Natural killer cell (primary cell): ENCODE measurements at regions of chr12 and their contacts with region 1.

Region 1: DNA sequence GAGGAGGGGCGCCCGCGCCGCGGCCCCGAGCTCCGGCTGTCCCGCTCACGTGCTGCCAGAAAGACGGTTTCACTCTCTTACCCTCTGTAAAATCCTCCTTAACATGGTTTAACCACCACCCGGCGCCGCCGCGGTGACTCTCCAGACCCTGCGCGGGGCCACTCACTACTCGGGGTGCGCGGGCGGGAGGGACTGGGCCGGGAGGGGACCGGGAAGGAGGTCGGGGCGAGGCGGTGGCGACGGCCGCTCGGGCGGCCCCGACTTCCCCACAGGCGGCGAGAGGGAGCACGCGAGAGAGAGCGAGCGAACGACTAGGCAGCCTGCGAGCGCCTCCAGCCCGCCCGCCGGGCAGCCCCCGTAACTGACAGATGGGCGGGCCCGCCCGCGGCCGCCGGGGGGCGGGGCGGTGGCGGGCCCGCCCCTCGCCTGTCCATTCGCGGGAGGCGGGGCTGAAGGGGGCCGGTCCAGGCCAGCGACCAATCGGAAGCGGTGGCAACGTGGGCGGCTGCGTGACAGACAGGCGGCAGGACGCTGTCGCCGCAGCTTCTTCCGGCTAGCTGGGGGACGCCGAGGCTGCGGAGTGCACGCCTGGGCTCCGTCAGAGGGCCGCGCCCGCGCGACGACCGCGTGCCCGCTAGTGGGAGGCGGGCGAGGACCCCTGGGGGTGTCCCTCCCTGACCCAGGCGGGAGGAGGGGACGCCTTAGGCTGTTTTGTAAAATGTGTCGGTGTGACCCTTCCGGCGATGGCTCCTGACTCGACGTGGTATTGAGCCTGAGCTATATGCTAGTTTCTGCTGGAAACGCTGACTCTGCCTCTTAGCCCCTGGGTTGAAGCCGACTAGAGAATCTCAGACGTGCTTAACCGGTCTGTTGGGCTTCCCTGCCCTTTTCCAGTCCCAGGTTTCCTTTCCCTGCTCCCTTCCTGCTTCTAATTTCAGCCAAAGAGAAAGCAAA is at the start of gene EEA1:
- DNase-seq: peak; percentile 94 to 97
- ATAC-seq: peak; percentile 81 to 95 (median 85)
- H3K4me3 ChIP-seq: peak within 1 kb of the TSS; percentile 86
- H3K4me3 Mint-ChIP-seq: peak within 1 kb of the TSS; percentile 92
- H3K27ac ChIP-seq: peak within 1 kb of the TSS; percentile 98
- H3K27ac Mint-ChIP-seq: peak within 1 kb of the TSS; percentile 90
- H3K4me1 ChIP-seq: peaks cover 16% of the 10 kb centered on the region
- H3K4me1 Mint-ChIP-seq: peaks cover 31 to 33% of the 10 kb centered on the region in 2 donors
- H3K27me3 ChIP-seq: no peaks in the 10 kb centered on the region
- H3K27me3 Mint-ChIP-seq: no peaks in the 10 kb centered on the region
- CTCF ChIP-seq: no peak
- total RNA-seq, gene EEA1: 15.0 to 20.0 (median 15.0) TPM

Region 2: GRCh38 chr12:92593734-92594402 is 335.4 kb before region 1 on chr12:
- intact Hi-C with region 1: loop called (anchors 5 kb)
- DNase-seq: peak; percentile 70 to 96
- ATAC-seq: peak; percentile 86 to 97 (median 91)
- H3K4me3 ChIP-seq: no peak overlapping the region
- H3K4me3 Mint-ChIP-seq: peak overlapping the region; percentile 83
- H3K27ac ChIP-seq: peak overlapping the region; percentile 99
- H3K27ac Mint-ChIP-seq: peak overlapping the region; percentile 91 to 98
- H3K4me1 ChIP-seq: peaks cover 21% of the 10 kb centered on the region
- H3K4me1 Mint-ChIP-seq: peaks cover 33 to 49% of the 10 kb centered on the region in 2 donors
- H3K27me3 ChIP-seq: no peaks in the 10 kb centered on the region
- H3K27me3 Mint-ChIP-seq: no peaks in the 10 kb centered on the region
- CTCF ChIP-seq: no peak

Region 3: GRCh38 chr12:92639017-92639416 is 290.2 kb before region 1 on chr12:
- intact Hi-C with region 1: no loop called
- DNase-seq: no peak
- ATAC-seq: no peak
- H3K4me3 ChIP-seq: no peak overlapping the region
- H3K4me3 Mint-ChIP-seq: no peak overlapping the region
- H3K27ac ChIP-seq: no peak overlapping the region
- H3K27ac Mint-ChIP-seq: no peak overlapping the region
- H3K4me1 ChIP-seq: no peaks in the 10 kb centered on the region
- H3K4me1 Mint-ChIP-seq: no peaks in the 10 kb centered on the region
- H3K27me3 ChIP-seq: no peaks in the 10 kb centered on the region
- H3K27me3 Mint-ChIP-seq: peaks cover 0 to 7% of the 10 kb centered on the region in 2 donors
- CTCF ChIP-seq: no peak

Region 4: DNA sequence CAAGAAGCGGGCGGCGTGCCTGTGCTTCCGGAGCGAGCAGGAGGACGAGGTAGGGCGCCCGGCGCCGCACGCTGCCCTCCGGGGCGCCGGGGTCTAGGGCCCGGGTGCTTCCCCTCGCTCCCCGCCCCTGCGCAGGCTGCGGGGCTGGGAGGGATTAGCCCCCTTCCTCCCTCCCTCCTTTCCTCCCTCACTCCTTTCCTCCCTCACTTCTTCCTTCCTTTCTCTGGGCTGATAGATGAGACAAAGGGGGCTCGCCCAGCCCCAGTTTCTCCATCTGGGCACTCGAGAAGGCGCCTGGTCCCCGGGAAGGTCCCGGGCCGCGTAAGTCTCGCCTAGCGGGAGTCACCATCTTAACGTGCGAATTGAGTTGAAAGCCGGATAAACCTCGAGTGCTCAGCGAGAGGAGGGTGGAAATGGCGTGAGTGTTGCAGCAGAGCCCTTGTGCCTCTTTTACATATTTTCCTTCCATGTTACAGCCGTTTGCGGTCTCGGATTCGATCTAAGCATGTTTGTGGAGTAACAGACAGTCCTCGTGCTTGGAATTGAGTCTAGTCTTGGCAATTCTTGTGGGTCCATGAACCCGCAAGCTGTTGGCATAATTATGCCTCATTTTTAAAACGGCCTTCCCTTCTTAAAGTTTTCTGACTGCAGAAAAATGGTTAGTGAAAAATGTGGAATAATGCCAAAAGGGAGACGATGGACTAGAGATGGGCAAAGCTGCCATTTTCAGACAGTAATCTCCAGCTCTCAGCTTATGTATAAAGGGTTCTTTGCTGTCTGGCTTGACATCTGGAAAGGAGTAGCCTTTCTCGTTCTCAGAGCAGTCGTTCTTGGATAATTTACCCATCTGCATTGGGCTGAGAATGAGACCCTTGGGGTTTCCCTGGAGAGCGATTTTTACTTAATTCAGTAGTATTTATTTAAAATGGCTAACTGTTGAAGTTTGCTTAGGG is 449.4 kb after region 1 on chr12:
- intact Hi-C with region 1: loop called (anchors 5 kb)
- DNase-seq: peak; percentile 53 to 84
- ATAC-seq: peak; percentile 49 to 71 (median 54)
- H3K4me3 ChIP-seq: peak overlapping the region; percentile 67
- H3K4me3 Mint-ChIP-seq: peak overlapping the region; percentile 99
- H3K27ac ChIP-seq: peak overlapping the region; percentile 76
- H3K27ac Mint-ChIP-seq: peak overlapping the region; percentile 93 to 98
- H3K4me1 ChIP-seq: peaks cover 14% of the 10 kb centered on the region
- H3K4me1 Mint-ChIP-seq: peaks cover 33 to 46% of the 10 kb centered on the region in 2 donors
- H3K27me3 ChIP-seq: no peaks in the 10 kb centered on the region
- H3K27me3 Mint-ChIP-seq: peaks cover 0 to 5% of the 10 kb centered on the region in 2 donors
- CTCF ChIP-seq: no peak

Region 5: GRCh38 chr12:93441617-93442410 is 512.6 kb after region 1 on chr12 and contains the start of gene UBE2N:
- intact Hi-C with region 1: loop called (anchors 5 kb)
- DNase-seq: peak; percentile 95 to 96
- ATAC-seq: peak; percentile 86 to 96 (median 87)
- H3K4me3 ChIP-seq: peak within 1 kb of the TSS; percentile 70
- H3K4me3 Mint-ChIP-seq: peak within 1 kb of the TSS; percentile 98
- H3K27ac ChIP-seq: peak within 1 kb of the TSS; percentile 92
- H3K27ac Mint-ChIP-seq: peak within 1 kb of the TSS; percentile 96 to 98
- H3K4me1 ChIP-seq: peaks cover 23% of the 10 kb centered on the region
- H3K4me1 Mint-ChIP-seq: peaks cover 48% of the 10 kb centered on the region in 2 donors
- H3K27me3 ChIP-seq: no peaks in the 10 kb centered on the region
- H3K27me3 Mint-ChIP-seq: no peaks in the 10 kb centered on the region
- CTCF ChIP-seq: no peak
- total RNA-seq, gene UBE2N: 72.3 to 79.7 (median 72.9) TPM

Region 6: DNA sequence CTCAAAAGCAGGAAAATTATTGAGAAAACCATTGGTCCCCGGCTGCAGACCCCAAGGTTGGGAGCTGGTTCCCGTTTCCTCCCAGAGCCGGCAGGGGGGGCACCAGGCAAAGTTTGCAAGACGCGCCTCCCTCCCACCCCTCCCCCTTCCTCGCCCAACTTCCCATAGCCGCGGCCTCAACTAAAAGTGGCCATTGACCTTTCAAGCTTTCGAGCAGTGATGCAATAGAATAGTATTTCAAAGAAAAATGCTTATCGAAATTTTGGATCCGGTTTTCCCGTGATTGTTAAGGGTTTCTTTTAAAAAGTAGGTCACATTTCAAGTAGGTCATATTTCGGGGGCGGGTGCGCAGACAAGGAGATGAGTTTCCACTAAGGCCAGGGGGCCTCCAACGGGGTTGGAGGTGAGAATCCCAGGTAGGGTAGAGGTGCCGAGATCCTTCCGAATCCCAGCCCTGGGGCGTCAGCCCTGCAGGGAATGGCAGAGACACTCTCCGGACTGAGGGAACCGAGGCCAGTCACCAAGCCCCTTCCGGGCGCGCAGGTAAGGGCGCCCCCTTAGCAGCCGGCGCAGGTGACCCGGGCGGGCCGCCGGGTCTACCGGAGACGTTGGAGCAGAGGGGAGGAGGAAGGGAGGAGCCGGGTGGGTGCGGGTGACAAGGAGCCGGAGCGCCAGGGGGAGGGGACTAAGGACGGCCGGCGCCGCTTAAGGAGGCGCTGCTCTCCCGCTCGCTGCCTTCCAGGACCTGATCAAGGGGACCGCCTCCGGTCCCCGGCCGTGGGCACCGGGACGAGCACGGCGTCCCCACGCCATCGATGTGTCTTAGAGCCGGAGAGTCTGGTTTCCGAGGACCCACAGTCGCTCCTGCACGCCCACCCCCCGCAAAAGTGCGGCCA is 640.7 kb after region 1 on chr12:
- intact Hi-C with region 1: loop called (anchors 5 kb)
- DNase-seq: peak; percentile 66 to 85
- ATAC-seq: peak; percentile 40 to 63 (median 46)
- H3K4me3 ChIP-seq: peak overlapping the region; percentile 95
- H3K4me3 Mint-ChIP-seq: peak overlapping the region; percentile 95
- H3K27ac ChIP-seq: peak overlapping the region; percentile 80
- H3K27ac Mint-ChIP-seq: peak overlapping the region; percentile 86 to 89
- H3K4me1 ChIP-seq: peaks cover 26% of the 10 kb centered on the region
- H3K4me1 Mint-ChIP-seq: peaks cover 31 to 38% of the 10 kb centered on the region in 2 donors
- H3K27me3 ChIP-seq: peaks cover 5% of the 10 kb centered on the region
- H3K27me3 Mint-ChIP-seq: peaks cover 0 to 4% of the 10 kb centered on the region in 2 donors
- CTCF ChIP-seq: peak; percentile 72

Region 7: DNA sequence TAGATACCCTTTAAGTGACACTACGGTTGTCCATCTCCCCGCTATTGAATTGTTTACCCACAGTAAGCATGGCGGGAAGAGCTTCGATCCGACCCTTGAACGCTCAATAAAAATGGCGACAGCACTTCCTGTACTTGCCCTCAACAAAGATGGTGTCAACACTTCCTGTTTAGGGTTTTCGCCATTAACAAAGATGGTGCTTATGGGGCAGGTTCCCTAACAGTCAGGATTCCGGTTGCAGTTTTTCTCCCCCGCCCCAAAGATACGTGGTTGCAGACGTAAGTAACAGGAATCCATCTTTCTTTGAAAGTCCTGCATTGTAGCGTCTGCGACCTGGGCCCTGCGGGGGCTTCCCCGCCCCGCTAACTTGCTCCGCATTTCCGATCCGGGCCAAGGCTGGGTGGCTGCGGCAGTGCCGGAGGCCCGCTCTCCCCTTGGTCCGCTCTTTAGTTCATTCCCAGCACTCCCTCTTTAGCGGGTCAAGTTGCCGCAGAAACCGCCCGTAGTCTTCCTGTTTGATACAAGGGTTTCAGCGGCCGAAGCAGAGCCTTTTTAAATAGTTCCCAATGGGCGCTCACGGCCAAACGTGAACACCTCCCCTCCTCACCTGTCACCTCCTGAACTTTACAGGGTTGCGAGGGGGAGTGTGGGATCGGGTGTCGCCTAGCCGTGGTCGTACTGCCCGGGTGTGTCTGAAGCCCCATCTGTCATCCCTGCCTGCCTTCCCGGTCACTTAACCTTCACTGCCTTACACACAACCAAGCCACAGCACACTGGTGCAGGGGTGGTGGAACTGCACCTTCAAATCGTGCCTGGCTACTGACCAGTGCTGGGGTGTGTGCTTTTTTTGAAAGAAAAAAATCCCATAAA is 748.2 kb after region 1 on chr12 and contains the start of gene CRADD:
- intact Hi-C with region 1: loop called (anchors 1 kb)
- DNase-seq: peak; percentile 80 to 99
- ATAC-seq: peak; percentile 91 to 98 (median 93)
- H3K4me3 ChIP-seq: peak within 1 kb of the TSS; percentile 90
- H3K4me3 Mint-ChIP-seq: peak within 1 kb of the TSS; percentile 97
- H3K27ac ChIP-seq: peak within 1 kb of the TSS; percentile 98
- H3K27ac Mint-ChIP-seq: peak within 1 kb of the TSS; percentile 99 to 100
- H3K4me1 ChIP-seq: peaks cover 12% of the 10 kb centered on the region
- H3K4me1 Mint-ChIP-seq: peaks cover 33 to 46% of the 10 kb centered on the region in 2 donors
- H3K27me3 ChIP-seq: no peaks in the 10 kb centered on the region
- H3K27me3 Mint-ChIP-seq: no peaks in the 10 kb centered on the region
- CTCF ChIP-seq: no peak
- total RNA-seq, gene CRADD: 19.1 to 27.5 (median 26.4) TPM